ENCODE measurements at regions of chr5 and their contacts with region 1.

Region 1: GRCh38 chr5:113513384-113514288 is at the start of gene YTHDC2:
- DNase-seq: peak; percentile 82
- H3K4me3 Mint-ChIP-seq: peak within 1 kb of the TSS; percentile 89
- H3K27ac Mint-ChIP-seq: peak within 1 kb of the TSS; percentile 91
- H3K4me1 Mint-ChIP-seq: peaks cover 40% of the 10 kb centered on the region
- H3K27me3 Mint-ChIP-seq: no peaks in the 10 kb centered on the region
- CTCF ChIP-seq: peak; percentile 8
- total RNA-seq, gene YTHDC2: 22.2 and 24.6 TPM in 2 replicates

Region 2: DNA sequence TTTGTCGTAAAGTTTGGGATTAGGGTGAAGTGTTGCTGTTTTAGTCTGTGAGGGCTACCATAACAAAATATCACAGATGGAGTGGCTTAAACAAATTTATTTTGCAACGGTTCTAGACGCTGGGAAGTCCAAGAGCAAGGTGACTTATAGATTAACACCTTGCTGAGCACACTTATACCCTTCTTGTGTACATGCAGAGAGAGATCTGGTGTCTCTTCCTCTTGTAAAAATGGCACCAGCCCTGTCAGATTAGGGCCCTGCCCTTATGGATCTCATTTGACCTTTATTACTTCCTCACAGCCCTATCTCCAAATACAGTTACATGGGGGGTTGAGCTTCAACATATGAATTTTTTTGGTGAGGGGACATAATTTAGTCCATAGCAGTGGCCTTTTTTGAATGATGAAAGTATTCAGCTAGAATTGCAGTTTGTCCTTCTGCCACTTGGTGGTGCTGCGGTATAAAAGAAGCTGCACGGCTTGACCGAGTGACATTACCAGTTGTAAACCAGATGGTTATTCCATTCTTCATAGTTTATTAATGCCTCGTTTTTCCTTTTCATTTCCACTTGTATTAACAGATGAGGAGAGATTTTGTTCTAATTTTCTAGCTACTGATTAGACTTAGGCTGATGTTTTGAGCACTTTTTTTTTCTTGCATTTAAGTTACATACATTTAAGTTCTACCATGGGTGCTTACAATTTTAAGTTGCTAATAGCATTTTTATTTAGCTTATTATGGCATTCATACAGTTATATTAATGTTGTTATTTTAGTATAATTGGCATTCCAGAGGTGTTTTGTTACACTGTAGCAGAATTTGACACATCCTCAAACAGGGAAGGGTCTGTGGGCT is 517.6 kb before region 1 on chr5:
- CTCF ChIA-PET with region 1: interaction called, 73 read pairs
- POLR2A ChIA-PET with region 1: interaction called, 13 read pairs
- intact Hi-C with region 1: loop called (anchors 1 kb)
- DNase-seq: peak; percentile 79
- H3K4me3 Mint-ChIP-seq: no peak overlapping the region
- H3K27ac Mint-ChIP-seq: no peak overlapping the region
- H3K4me1 Mint-ChIP-seq: peaks cover 10% of the 10 kb centered on the region
- H3K27me3 Mint-ChIP-seq: no peaks in the 10 kb centered on the region
- CTCF ChIP-seq: peak; percentile 92

Region 3: GRCh38 chr5:113166852-113167366 is 346.7 kb before region 1 on chr5:
- CTCF ChIA-PET with region 1: no interaction called
- POLR2A ChIA-PET with region 1: no interaction called
- intact Hi-C with region 1: loop called (anchors 5 kb)
- DNase-seq: peak; percentile 94
- H3K4me3 Mint-ChIP-seq: peak overlapping the region; percentile 60
- H3K27ac Mint-ChIP-seq: peak overlapping the region; percentile 87
- H3K4me1 Mint-ChIP-seq: peaks cover 66% of the 10 kb centered on the region
- H3K27me3 Mint-ChIP-seq: no peaks in the 10 kb centered on the region
- CTCF ChIP-seq: no peak

Region 4: GRCh38 chr5:113344973-113345940 is 168.4 kb before region 1 on chr5:
- CTCF ChIA-PET with region 1: interaction called, 7 read pairs
- POLR2A ChIA-PET with region 1: interaction called, 23 read pairs
- intact Hi-C with region 1: no loop called
- DNase-seq: peak; percentile 92
- H3K4me3 Mint-ChIP-seq: peak overlapping the region; percentile 19
- H3K27ac Mint-ChIP-seq: peak overlapping the region; percentile 97
- H3K4me1 Mint-ChIP-seq: peaks cover 47% of the 10 kb centered on the region
- H3K27me3 Mint-ChIP-seq: no peaks in the 10 kb centered on the region
- CTCF ChIP-seq: no peak

Region 5: DNA sequence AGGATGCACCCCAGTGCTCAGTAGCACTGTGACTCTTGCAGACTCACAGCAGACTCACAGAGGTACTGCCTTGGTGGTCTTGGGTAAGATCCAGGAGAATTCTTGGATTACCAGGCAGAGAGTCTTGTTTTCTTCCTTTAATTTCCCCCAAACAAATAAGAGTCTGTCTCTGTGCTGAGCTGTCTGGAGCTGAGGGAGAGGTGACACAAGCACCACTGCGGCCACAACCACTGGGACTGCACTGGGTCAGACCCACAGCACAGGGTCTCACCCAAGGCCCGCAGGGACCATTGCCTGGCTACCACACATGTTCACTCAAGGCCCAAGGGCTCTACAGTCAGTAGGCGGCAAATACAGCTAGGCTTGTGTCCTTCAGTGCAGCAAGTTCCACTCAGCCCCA is 11.6 kb before region 1 on chr5:
- CTCF ChIA-PET with region 1: interaction called, 11 read pairs
- POLR2A ChIA-PET with region 1: interaction called, 5 read pairs
- intact Hi-C with region 1: no loop called
- DNase-seq: no peak
- H3K4me3 Mint-ChIP-seq: no peak overlapping the region
- H3K27ac Mint-ChIP-seq: no peak overlapping the region
- H3K4me1 Mint-ChIP-seq: peaks cover 7% of the 10 kb centered on the region
- H3K27me3 Mint-ChIP-seq: no peaks in the 10 kb centered on the region
- CTCF ChIP-seq: no peak